H1 (cell line): ENCODE measurements at regions of chr11 and their contacts with region 1.

Region 1: GRCh38 chr11:75241036-75241905 is 697 bp downstream of the TPBGL start:
- DNase-seq: peak; percentile 63 to 97
- H3K4me3 ChIP-seq: peak overlapping the region; percentile 37 to 63 (median 44)
- H3K27ac ChIP-seq: no peak overlapping the region
- H3K4me1 ChIP-seq: peaks cover 5 to 19% (median 10%) of the 10 kb centered on the region in 4 experiments
- H3K27me3 ChIP-seq: peaks cover 24 to 50% (median 40%) of the 10 kb centered on the region in 4 experiments
- CTCF ChIP-seq: peak; percentile 94 to 99 (median 98)
- EP300 ChIP-seq: 0 out of 3 replicates have a peak, but pooled peaks of 1 of the 2 experiments have one; percentile 70
- POLR2A ChIP-seq: peak in 1 of 2 experiments; percentile 55; a peak in 1 of 3 replicates
- RAD21 ChIP-seq: peak; percentile 23 to 75; a peak in 3 of 4 replicates

Region 2: GRCh38 chr11:75176776-75177175 is 64.5 kb before region 1 on chr11:
- CTCF ChIA-PET with region 1: no interaction called
- POLR2A ChIA-PET with region 1: no interaction called
- DNase-seq: no peak
- H3K4me3 ChIP-seq: no peak overlapping the region
- H3K27ac ChIP-seq: no peak overlapping the region
- H3K4me1 ChIP-seq: no peaks in the 10 kb centered on the region; a peak in 1 of 7 replicates
- H3K27me3 ChIP-seq: no peaks in the 10 kb centered on the region
- CTCF ChIP-seq: no peak
- EP300 ChIP-seq: no peak
- POLR2A ChIP-seq: no peak
- RAD21 ChIP-seq: no peak

Region 3: GRCh38 chr11:75223954-75224643 is 17.2 kb before region 1 on chr11:
- CTCF ChIA-PET with region 1: interaction called, 726 read pairs
- POLR2A ChIA-PET with region 1: interaction called, 10 read pairs
- DNase-seq: no peak
- H3K4me3 ChIP-seq: no peak overlapping the region
- H3K27ac ChIP-seq: no peak overlapping the region
- H3K4me1 ChIP-seq: peaks cover 0 to 5% (median 1%) of the 10 kb centered on the region in 4 experiments; a peak in 1 of 7 replicates
- H3K27me3 ChIP-seq: no peaks in the 10 kb centered on the region
- CTCF ChIP-seq: peak in 2 of 3 experiments; percentile 15 to 24; a peak in 2 of 4 replicates
- EP300 ChIP-seq: no peak
- POLR2A ChIP-seq: no peak
- RAD21 ChIP-seq: no peak; a peak in 1 of 4 replicates

Region 4: GRCh38 chr11:75408852-75409219 is 167.6 kb after region 1 on chr11:
- CTCF ChIA-PET with region 1: no interaction called
- POLR2A ChIA-PET with region 1: no interaction called
- DNase-seq: no peak
- H3K4me3 ChIP-seq: no peak overlapping the region
- H3K27ac ChIP-seq: no peak overlapping the region
- H3K4me1 ChIP-seq: no peaks in the 10 kb centered on the region
- H3K27me3 ChIP-seq: no peaks in the 10 kb centered on the region
- CTCF ChIP-seq: no peak
- EP300 ChIP-seq: no peak
- POLR2A ChIP-seq: 0 out of 3 replicates have a peak, but pooled peaks of 1 of the 2 experiments have one; percentile 51
- RAD21 ChIP-seq: no peak